HepG2 (cell line): ENCODE measurements at regions of chr3 and their contacts with region 1.

Region 1: GRCh38 chr3:30258426-30259392 is 347.7 kb upstream of the TGFBR2 start:
- DNase-seq: peak; percentile 100
- ATAC-seq: peak; percentile 99
- H3K4me3 ChIP-seq: peak overlapping the region in 1 of 3 experiments; percentile 26; a peak in 1 of 6 replicates
- H3K27ac ChIP-seq: peak overlapping the region; percentile 96
- H3K4me1 ChIP-seq: peaks cover 77% of the 10 kb centered on the region
- H3K27me3 ChIP-seq: no peaks in the 10 kb centered on the region
- CTCF ChIP-seq: peak; percentile 24
- EP300 ChIP-seq: peak; percentile 95 to 99
- POLR2A ChIP-seq: no peak
- RAD21 ChIP-seq: peak; percentile 56; the same call in 1 of the 2 replicates

Region 2: GRCh38 chr3:30199096-30199759 is 59.5 kb before region 1 on chr3:
- CTCF ChIA-PET with region 1: no interaction called
- POLR2A ChIA-PET with region 1: interaction called, 16 read pairs
- in situ Hi-C with region 1: no loop called
- intact Hi-C with region 1: loop called (anchors 1 kb)
- DNase-seq: peak; percentile 49
- ATAC-seq: peak; percentile 61
- H3K4me3 ChIP-seq: no peak overlapping the region
- H3K27ac ChIP-seq: no peak overlapping the region
- H3K4me1 ChIP-seq: peaks cover 21% of the 10 kb centered on the region
- H3K27me3 ChIP-seq: no peaks in the 10 kb centered on the region; a peak in 1 of 5 replicates
- CTCF ChIP-seq: peak; percentile 72
- EP300 ChIP-seq: no peak
- POLR2A ChIP-seq: no peak
- RAD21 ChIP-seq: peak; percentile 62

Region 3: GRCh38 chr3:30241721-30242120 is 17.0 kb before region 1 on chr3:
- CTCF ChIA-PET with region 1: no interaction called
- POLR2A ChIA-PET with region 1: interaction called, 10 read pairs
- in situ Hi-C with region 1: no loop called
- intact Hi-C with region 1: loop called (anchors 2 kb)
- DNase-seq: peak; percentile 88
- ATAC-seq: peak; percentile 100
- H3K4me3 ChIP-seq: no peak overlapping the region
- H3K27ac ChIP-seq: peak overlapping the region; percentile 5
- H3K4me1 ChIP-seq: peaks cover 49% of the 10 kb centered on the region
- H3K27me3 ChIP-seq: no peaks in the 10 kb centered on the region
- CTCF ChIP-seq: no peak
- EP300 ChIP-seq: peak in 1 of 2 experiments; percentile 68; a peak in 2 of 4 replicates
- POLR2A ChIP-seq: no peak
- RAD21 ChIP-seq: no peak

Region 4: GRCh38 chr3:30292192-30292893 is 33.6 kb after region 1 on chr3:
- CTCF ChIA-PET with region 1: no interaction called
- POLR2A ChIA-PET with region 1: interaction called, 30 read pairs
- in situ Hi-C with region 1: no loop called
- intact Hi-C with region 1: loop called (anchors 5 kb)
- DNase-seq: peak; percentile 65
- ATAC-seq: no peak
- H3K4me3 ChIP-seq: no peak overlapping the region
- H3K27ac ChIP-seq: peak overlapping the region; percentile 4
- H3K4me1 ChIP-seq: peaks cover 65% of the 10 kb centered on the region
- H3K27me3 ChIP-seq: no peaks in the 10 kb centered on the region
- CTCF ChIP-seq: no peak
- EP300 ChIP-seq: peak in 1 of 2 experiments; percentile 66; a peak in 1 of 4 replicates
- POLR2A ChIP-seq: no peak
- RAD21 ChIP-seq: no peak

Region 5: DNA sequence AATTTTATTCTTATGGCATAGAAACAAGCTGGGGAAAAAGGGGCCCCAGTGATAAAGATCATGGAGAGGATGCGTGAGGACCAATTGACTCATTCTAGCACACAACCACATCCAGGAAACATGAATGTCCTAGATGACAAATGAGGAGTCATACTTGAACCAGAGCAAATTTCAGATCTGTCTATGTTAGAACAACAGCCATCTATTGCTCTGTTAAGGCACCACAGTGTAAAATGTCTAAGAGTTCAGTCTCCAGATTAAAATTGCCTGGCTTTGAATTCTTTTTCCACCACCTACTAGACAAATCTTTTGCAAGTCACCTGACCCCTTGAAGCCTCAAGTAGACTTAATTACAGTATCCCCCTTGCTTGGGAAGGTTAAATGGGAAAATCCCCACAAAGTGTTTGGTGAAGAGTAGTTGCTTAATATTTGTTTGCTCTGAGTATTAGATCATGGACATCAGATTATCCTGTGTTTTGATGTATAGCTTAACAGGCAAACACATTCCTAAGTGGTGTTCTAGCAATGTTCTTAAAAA is 89.0 kb after region 1 on chr3:
- CTCF ChIA-PET with region 1: no interaction called
- POLR2A ChIA-PET with region 1: interaction called, 28 read pairs
- in situ Hi-C with region 1: no loop called
- intact Hi-C with region 1: loop called (anchors 10 kb)
- DNase-seq: peak; percentile 87
- ATAC-seq: peak; percentile 66
- H3K4me3 ChIP-seq: no peak overlapping the region; a peak in 1 of 6 replicates
- H3K27ac ChIP-seq: peak overlapping the region; percentile 62
- H3K4me1 ChIP-seq: peaks cover 93% of the 10 kb centered on the region
- H3K27me3 ChIP-seq: no peaks in the 10 kb centered on the region
- CTCF ChIP-seq: no peak
- EP300 ChIP-seq: peak in 1 of 2 experiments; percentile 88; a peak in 2 of 4 replicates
- POLR2A ChIP-seq: no peak
- RAD21 ChIP-seq: no peak

Region 6: DNA sequence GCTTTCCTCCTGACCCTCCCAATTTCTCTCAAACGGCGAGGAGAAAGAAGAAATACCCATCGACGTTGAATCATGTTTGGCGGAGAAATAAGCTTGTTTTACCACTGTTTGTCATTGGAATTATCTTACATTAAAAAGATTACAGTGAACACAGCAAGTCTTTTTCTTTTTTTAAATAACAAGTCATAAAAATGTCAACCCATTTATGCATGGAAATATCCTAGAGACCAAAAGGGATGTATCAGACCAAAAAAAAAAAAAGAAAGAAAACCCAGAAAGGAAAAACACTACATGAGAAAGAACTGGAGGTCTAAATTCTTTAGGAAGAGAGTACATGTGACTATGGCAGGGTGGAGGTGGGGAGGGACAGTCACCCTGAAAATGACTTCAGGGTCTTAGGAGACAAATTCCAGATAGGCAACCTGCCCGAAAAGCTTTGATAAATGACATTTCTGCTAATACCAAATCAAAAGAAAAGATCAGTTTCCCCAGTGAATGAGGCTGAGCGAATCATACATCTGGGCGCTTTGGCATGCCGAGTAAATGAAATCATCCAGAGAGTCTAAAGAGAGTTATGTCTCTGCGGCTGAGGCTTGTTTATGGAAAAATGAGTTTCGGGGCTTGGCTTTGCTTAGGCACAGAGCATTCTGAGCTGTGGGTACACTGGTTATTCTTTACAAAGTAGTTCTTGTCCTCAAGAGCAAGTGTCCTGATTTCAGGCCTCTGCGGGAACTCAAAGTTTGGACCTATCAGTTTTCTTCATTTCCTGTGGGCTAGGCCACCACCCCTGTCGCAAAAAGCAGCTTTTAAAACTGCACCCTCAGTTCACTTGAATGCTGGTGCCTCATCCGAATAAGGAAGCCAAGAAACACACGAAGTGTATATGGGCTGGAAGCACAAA is 237.6 kb after region 1 on chr3:
- CTCF ChIA-PET with region 1: no interaction called
- POLR2A ChIA-PET with region 1: interaction called, 15 read pairs
- in situ Hi-C with region 1: no loop called
- intact Hi-C with region 1: loop called (anchors 1 kb)
- DNase-seq: no peak
- ATAC-seq: no peak
- H3K4me3 ChIP-seq: no peak overlapping the region
- H3K27ac ChIP-seq: no peak overlapping the region
- H3K4me1 ChIP-seq: peaks cover 97% of the 10 kb centered on the region
- H3K27me3 ChIP-seq: no peaks in the 10 kb centered on the region
- CTCF ChIP-seq: no peak
- EP300 ChIP-seq: no peak
- POLR2A ChIP-seq: no peak
- RAD21 ChIP-seq: no peak

Region 7: DNA sequence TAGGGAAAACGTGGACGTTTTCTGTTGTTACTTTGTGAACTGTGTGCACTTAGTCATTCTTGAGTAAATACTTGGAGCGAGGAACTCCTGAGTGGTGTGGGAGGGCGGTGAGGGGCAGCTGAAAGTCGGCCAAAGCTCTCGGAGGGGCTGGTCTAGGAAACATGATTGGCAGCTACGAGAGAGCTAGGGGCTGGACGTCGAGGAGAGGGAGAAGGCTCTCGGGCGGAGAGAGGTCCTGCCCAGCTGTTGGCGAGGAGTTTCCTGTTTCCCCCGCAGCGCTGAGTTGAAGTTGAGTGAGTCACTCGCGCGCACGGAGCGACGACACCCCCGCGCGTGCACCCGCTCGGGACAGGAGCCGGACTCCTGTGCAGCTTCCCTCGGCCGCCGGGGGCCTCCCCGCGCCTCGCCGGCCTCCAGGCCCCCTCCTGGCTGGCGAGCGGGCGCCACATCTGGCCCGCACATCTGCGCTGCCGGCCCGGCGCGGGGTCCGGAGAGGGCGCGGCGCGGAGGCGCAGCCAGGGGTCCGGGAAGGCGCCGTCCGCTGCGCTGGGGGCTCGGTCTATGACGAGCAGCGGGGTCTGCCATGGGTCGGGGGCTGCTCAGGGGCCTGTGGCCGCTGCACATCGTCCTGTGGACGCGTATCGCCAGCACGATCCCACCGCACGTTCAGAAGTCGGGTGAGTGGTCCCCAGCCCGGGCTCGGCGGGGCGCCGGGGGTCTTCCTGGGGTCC is 347.8 kb after region 1 on chr3 and contains the start of gene TGFBR2:
- CTCF ChIA-PET with region 1: no interaction called
- POLR2A ChIA-PET with region 1: interaction called, 43 read pairs
- in situ Hi-C with region 1: loop called (anchors 10 kb)
- intact Hi-C with region 1: loop called (anchors 1 kb)
- DNase-seq: peak; percentile 98
- ATAC-seq: peak; percentile 98
- H3K4me3 ChIP-seq: peak within 1 kb of the TSS; percentile 96 to 100 (median 99)
- H3K27ac ChIP-seq: peak within 1 kb of the TSS; percentile 93
- H3K4me1 ChIP-seq: peaks cover 52% of the 10 kb centered on the region
- H3K27me3 ChIP-seq: peaks cover 0 to 2% of the 10 kb centered on the region in 2 experiments; a peak in 1 of 5 replicates
- CTCF ChIP-seq: 0 out of 2 replicates have a peak, but pooled peaks have one; percentile 10
- EP300 ChIP-seq: peak in 1 of 2 experiments; percentile 92; a peak in 2 of 4 replicates
- POLR2A ChIP-seq: peak; percentile 73 to 93
- RAD21 ChIP-seq: peak; percentile 92
- total RNA-seq, gene TGFBR2: 68.1 and 82.2 TPM in 2 replicates

Region 8: DNA sequence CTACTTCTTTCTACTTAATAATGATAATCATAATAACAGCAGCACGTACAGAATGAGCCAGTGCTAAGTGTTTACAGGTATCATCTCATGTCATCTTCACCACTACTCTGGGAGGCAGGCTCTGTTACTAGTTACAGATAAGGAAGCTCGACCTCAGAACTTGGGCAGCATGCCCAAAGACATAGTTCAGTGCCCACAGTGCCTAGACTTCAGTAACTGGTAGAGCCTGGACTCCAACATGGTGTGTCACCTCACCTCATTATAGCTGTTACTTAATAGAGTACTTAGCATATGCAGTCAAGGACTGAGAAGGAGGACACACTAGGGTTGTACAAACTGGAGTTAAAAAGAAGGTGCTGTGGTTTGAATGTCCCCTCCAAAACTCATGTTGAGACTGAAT is 628.2 kb after region 1 on chr3:
- CTCF ChIA-PET with region 1: no interaction called
- POLR2A ChIA-PET with region 1: no interaction called
- in situ Hi-C with region 1: no loop called
- intact Hi-C with region 1: no loop called
- DNase-seq: no peak
- ATAC-seq: no peak
- H3K4me3 ChIP-seq: no peak overlapping the region
- H3K27ac ChIP-seq: no peak overlapping the region
- H3K4me1 ChIP-seq: no peaks in the 10 kb centered on the region
- H3K27me3 ChIP-seq: peaks cover 0 to 4% of the 10 kb centered on the region in 2 experiments; a peak in 1 of 5 replicates
- CTCF ChIP-seq: no peak
- EP300 ChIP-seq: no peak
- POLR2A ChIP-seq: no peak
- RAD21 ChIP-seq: no peak